Breast epithelium (tissue), 4 donors: ENCODE measurements at regions of chr2 and their contacts with region 1.

Region 1: DNA sequence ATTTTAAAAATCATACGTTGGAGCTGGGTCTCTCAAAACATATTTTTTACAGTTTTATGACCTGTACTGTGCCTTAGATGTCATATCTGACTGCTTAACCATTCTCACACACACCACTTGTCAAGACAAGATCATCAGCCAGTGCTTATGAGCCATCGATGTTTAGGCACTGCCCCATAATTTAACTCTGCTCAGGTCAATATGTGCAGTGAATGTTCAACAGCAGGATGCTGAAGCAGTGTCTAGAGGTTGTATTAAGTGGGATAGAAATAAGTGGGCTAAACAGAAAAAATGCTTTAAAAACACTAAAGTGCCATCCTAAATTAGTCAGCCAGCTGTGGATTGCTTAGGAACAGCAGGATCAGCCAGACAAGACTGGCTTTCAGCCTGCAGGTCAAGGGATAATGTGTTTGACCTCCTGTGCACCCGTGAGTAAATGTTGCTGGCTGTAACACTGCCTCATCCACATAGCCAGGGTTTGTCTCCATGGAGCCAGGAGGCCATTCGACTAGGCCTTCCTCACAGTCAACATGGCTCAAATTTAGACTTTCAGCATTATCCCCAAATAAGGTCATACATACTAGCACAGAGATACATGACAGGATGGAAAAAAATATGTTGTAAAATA is 139.0 kb upstream of the NXPH2 start:
- DNase-seq: no peak
- H3K4me3 ChIP-seq: no peak overlapping the region
- H3K27ac ChIP-seq: no peak overlapping the region
- H3K4me1 ChIP-seq: no peaks in the 10 kb centered on the region
- H3K27me3 ChIP-seq: no peaks in the 10 kb centered on the region
- CTCF ChIP-seq: no peak
- POLR2A ChIP-seq: no peak

Region 2: DNA sequence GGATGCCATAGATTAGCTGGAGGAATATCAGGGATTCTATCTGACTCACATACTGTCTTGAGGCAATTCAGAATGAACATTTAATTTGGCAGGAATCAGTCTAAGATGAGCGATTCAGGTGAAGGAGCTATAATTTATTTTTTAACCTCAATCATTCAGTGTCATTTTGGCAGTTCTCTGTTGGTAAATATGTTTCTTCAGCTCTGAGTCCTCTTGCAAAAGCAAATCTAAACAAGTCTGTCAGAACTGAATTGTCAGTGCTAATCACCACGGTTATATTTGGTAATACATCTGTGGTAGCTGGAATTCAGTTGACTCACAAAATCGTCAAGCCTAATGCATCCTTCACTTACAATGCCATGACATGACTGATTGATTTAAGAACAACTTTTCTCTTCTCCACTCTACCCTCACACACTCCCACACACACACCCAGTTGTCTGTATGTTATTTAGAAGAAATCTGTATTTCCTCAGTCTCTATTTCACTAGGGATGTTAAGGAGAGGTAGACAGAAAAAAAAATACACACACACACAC is 377.5 kb after region 1 on chr2:
- intact Hi-C with region 1: loop called (anchors 10 kb)
- DNase-seq: no peak
- H3K4me3 ChIP-seq: no peak overlapping the region
- H3K27ac ChIP-seq: no peak overlapping the region
- H3K4me1 ChIP-seq: no peaks in the 10 kb centered on the region
- H3K27me3 ChIP-seq: no peaks in the 10 kb centered on the region
- CTCF ChIP-seq: no peak
- POLR2A ChIP-seq: no peak